ENCODE measurements at regions of chr19 and their contacts with region 1.

Region 1: DNA sequence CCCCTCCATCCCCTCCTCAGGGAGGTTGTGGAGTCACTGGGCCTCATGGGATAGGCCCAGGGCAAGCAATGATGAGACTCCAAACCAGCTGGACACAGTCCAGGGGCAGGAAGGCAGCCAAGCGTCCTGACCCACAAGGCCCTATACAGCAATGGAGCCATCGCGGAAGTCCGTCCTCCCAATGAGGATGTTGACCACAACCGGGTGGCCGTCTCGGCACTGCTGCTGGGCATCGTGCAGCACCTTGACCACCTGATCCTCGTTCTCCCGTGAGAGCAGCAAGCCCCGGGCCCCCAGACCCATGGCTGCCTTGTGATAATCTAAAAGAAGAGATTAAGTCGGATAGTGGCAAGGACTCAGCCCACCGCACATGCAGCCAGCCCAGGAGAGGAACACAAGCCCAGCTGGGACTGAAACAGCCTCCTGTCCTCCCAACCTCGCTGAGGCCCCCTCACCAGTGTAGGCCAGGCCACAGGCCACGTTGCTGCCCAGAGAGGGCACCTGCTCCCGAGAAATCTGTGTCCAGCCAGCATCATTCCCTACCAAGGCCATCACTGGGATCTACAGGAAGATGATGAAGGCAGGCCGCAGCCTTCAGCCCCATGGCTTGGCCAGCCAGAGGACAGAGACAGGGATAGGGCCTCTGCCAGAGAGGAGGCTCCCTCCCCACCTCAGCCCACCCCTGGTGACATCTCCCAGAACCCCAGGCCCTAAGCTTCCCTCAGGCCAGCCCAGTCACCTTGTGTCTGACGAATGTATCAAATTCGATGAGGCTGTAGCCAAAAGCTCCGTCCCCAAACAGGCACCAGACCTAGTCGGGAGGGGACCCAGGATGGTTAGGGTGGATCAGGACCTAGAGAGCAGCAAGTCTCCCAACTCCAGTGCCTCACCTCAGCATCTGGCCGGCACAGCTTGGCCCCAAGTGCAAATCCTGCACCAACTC is 8.2 kb downstream of the SYDE1 start:
- DNase-seq: no peak

Region 2: DNA sequence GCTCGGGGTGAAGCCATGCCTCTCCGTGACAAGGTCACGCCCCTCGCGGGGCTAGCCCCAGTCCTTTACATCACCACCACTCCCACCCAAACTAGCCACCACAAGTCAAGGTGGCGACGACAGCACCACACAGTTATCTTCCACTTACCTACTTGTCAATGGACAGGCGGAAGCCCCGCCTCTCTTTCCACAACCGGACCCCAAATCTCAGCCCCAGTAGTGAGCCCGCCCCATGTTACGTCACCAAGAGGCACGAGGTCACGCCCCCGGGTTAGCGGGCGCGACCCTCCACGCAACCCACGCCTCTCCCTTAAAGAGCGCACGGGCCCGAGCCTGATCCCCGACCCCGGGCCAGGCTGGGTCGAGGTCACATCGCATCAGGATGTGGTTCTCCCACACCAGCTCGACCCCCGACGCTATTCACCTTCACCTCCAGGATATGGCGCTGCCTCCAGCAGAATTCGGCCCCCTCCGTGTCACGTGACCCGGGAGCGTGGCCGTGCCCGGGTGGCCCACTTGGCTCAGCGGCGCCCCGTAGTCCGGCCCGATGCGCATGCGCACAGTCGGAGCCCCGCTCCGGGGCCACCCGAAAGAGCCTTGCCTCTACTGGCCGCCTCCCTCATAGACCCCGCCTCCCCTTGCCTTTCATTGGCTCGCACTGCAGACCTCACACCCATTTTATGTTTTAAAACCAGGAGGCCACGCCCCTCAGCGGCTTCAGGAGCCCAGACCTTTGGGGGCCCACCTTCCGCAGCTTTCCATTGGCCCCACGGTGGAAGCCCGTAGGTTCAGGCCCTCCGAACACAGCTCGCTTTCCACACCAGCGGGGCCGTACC is 10.1 kb after region 1 on chr19:
- CTCF ChIA-PET with region 1: no interaction called
- POLR2A ChIA-PET with region 1: interaction called, 17 read pairs
- DNase-seq: peak; percentile 99